ENCODE measurements at regions of chr18 and their contacts with region 1.

Region 1: DNA sequence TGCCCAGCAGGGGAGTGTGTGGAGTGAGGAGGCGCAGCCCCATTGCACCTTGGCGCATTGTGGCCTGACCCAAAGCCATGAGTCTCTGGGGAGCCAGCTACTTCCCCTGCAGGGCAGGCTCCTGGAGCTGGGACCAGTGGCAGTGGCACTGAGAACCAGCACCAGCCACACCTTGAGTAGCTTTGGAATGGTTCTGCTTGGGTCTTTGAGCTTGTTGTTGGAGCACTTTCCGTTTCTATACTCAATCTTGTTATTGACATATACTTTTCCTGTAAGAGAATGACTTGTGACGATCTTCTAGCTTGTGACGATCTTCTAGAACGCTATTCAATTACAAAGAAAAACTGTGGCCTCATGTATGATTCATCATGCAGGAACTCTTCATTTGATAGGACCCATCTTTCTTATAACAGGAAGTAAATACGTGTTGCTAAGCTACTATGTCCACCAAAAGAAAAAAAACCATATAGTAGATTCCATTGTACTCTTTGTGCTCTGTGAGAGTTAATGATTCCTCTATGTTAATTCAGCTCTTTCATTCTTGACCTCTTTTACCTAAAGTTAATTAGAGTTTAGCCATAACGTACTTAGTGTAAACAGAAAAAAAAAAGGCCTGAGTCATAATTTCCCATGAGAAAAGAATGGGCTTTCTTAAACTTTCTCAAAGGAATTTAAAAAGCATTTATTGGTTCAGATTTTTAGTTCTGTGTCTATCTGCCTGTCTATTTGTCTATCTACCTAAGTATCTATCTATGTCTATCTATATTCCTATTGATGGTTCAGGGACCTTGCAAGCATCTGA is 113.1 kb downstream of the GATA6 start:
- DNase-seq: peak; percentile 40 to 96
- H3K4me3 ChIP-seq: peak overlapping the region; percentile 19; the same call in 1 of the 2 replicates
- H3K27ac ChIP-seq: peak overlapping the region; percentile 76
- H3K4me1 ChIP-seq: peaks cover 35% of the 10 kb centered on the region
- H3K27me3 ChIP-seq: no peaks in the 10 kb centered on the region
- CTCF ChIP-seq: no peak

Region 2: GRCh38 chr18:22250591-22250996 is 31.9 kb before region 1 on chr18:
- CTCF ChIA-PET with region 1: no interaction called
- POLR2A ChIA-PET with region 1: interaction called, 3 read pairs
- intact Hi-C with region 1: loop called (anchors 2 kb)
- DNase-seq: peak; percentile 53 to 69
- H3K4me3 ChIP-seq: no peak overlapping the region
- H3K27ac ChIP-seq: 0 out of 2 replicates have a peak overlapping the region, but pooled peaks have one; percentile 28
- H3K4me1 ChIP-seq: peaks cover 15% of the 10 kb centered on the region
- H3K27me3 ChIP-seq: no peaks in the 10 kb centered on the region
- CTCF ChIP-seq: no peak

Region 3: DNA sequence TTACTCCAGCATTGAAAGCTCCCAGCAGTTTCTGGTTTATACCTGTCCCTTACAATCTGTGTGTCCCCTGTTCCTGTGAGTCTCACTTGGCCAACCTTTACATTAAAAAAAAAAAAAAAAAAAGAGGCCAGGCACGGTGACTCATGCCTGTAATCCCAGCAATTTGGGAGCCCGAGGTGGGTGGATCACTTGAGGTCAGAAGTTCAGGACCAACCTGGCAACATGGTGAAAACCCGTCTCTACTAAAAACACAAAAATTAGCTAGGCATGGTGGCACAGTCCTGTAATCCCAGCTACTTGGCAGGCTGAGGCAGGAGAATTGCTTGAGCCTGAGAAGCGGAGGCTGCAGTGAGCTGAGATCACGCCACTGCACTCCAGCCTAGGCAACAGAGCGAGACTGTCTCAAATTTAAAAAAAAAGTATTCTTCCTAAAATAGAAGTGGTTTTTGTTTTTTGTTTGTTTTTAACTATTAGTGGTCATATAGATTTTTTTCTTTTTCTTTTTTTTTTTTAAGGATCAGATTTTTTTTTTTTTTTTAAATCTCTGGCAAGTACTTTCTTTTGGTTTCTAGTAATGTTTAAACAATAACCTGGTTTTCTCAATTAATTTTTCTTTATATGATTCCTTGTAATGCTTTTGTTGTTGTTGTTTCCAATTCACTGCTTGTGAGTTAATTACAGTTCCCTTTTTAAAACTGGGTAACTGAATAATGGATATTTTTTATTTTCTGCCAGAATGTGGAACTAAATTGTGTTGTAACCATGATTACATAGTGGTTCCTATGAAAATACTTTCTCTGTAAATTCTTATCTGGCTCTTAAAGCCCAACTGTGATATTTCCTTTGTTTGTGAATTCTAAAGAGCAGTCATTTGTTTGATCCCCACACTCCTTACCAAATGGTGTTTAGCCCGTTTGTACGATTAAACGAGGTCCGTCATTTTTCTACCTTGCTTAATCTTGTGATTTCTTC is 18.4 kb after region 1 on chr18:
- CTCF ChIA-PET with region 1: no interaction called
- POLR2A ChIA-PET with region 1: interaction called, 14 read pairs
- intact Hi-C with region 1: no loop called
- DNase-seq: peak; percentile 54 to 71
- H3K4me3 ChIP-seq: no peak overlapping the region
- H3K27ac ChIP-seq: peak overlapping the region; percentile 45; the same call in 1 of the 2 replicates
- H3K4me1 ChIP-seq: peaks cover 14% of the 10 kb centered on the region
- H3K27me3 ChIP-seq: no peaks in the 10 kb centered on the region
- CTCF ChIP-seq: no peak

Region 4: GRCh38 chr18:22465859-22466457 is 183.4 kb after region 1 on chr18:
- CTCF ChIA-PET with region 1: no interaction called
- POLR2A ChIA-PET with region 1: interaction called, 3 read pairs
- intact Hi-C with region 1: loop called (anchors 10 kb)
- DNase-seq: peak; percentile 50 to 91
- H3K4me3 ChIP-seq: peak overlapping the region; percentile 52; the same call in 1 of the 2 replicates
- H3K27ac ChIP-seq: peak overlapping the region; percentile 100
- H3K4me1 ChIP-seq: peaks cover 39% of the 10 kb centered on the region
- H3K27me3 ChIP-seq: no peaks in the 10 kb centered on the region
- CTCF ChIP-seq: no peak

Region 5: DNA sequence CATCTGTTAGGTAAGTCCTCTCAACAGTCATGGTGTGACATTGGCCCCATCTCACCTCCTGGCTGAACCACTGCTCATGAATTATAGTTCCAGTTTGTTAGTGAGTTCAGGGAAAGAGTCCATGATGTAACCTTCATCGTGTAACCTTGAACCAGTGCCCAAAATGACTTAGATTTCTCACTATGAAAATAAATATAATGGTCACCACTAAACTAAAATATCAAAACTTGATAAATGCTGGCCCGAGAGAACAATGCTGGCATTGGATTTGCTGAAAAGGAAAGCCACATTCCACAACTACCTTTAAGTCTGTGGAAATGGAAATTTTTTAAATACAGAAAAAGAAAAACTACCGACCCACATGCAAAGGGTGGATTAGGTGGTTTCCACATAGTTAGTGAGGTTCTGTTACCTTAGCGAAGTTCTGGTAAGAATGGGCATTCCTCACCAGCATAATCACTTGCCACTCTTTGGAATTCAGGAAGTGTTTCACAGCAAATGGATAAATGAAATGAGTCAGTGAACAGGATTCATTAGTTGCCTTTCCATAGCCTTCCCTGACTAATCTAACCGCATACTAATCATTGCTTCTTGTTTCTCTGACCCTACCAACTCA is 269.1 kb after region 1 on chr18:
- CTCF ChIA-PET with region 1: no interaction called
- POLR2A ChIA-PET with region 1: no interaction called
- intact Hi-C with region 1: loop called (anchors 5 kb)
- DNase-seq: peak; percentile 33 to 97
- H3K4me3 ChIP-seq: peak overlapping the region; percentile 3; the same call in 1 of the 2 replicates
- H3K27ac ChIP-seq: peak overlapping the region; percentile 99
- H3K4me1 ChIP-seq: peaks cover 42% of the 10 kb centered on the region
- H3K27me3 ChIP-seq: no peaks in the 10 kb centered on the region
- CTCF ChIP-seq: no peak